KBM-7 (cell line): ENCODE measurements at regions of chr12 and their contacts with region 1.

Region 1: GRCh38 chr12:107884769-107885694 is 110.5 kb downstream of the ASCL4 start:
- DNase-seq: peak; percentile 76

Region 2: GRCh38 chr12:107685360-107686248 is 199.4 kb before region 1 on chr12 and contains the start of gene PWP1:
- in situ Hi-C with region 1: loop called (anchors 25 kb)
- DNase-seq: peak; percentile 96

Region 3: GRCh38 chr12:107760809-107761501 is 124.1 kb before region 1 on chr12 and contains the start of gene PRDM4:
- in situ Hi-C with region 1: loop called (anchors 25 kb)
- DNase-seq: peak; percentile 95